ENCODE measurements at regions of chr5 and their contacts with region 1.

Region 1: GRCh38 chr5:82346399-82347165 is 68.4 kb upstream of the RPS23 start:
- DNase-seq: no peak
- H3K4me3 ChIP-seq: no peak overlapping the region
- H3K27ac ChIP-seq: no peak overlapping the region
- H3K4me1 ChIP-seq: no peaks in the 10 kb centered on the region
- H3K27me3 ChIP-seq: no peaks in the 10 kb centered on the region
- CTCF ChIP-seq: no peak

Region 2: GRCh38 chr5:82147865-82148573 is 198.6 kb before region 1 on chr5:
- CTCF ChIA-PET with region 1: no interaction called
- POLR2A ChIA-PET with region 1: no interaction called
- intact Hi-C with region 1: no loop called
- DNase-seq: no peak
- H3K4me3 ChIP-seq: no peak overlapping the region
- H3K27ac ChIP-seq: no peak overlapping the region
- H3K4me1 ChIP-seq: peaks cover 10% of the 10 kb centered on the region
- H3K27me3 ChIP-seq: no peaks in the 10 kb centered on the region
- CTCF ChIP-seq: no peak

Region 3: GRCh38 chr5:82387001-82387818 is 40.6 kb after region 1 on chr5:
- CTCF ChIA-PET with region 1: no interaction called
- POLR2A ChIA-PET with region 1: interaction called, 27 read pairs
- intact Hi-C with region 1: no loop called
- DNase-seq: peak in 1 of 2 experiments; percentile 65
- H3K4me3 ChIP-seq: no peak overlapping the region
- H3K27ac ChIP-seq: no peak overlapping the region
- H3K4me1 ChIP-seq: peaks cover 20% of the 10 kb centered on the region
- H3K27me3 ChIP-seq: no peaks in the 10 kb centered on the region
- CTCF ChIP-seq: no peak

Region 4: GRCh38 chr5:82421119-82421518 is 74.5 kb after region 1 on chr5:
- CTCF ChIA-PET with region 1: no interaction called
- POLR2A ChIA-PET with region 1: no interaction called
- intact Hi-C with region 1: no loop called
- DNase-seq: peak; percentile 31 to 73
- H3K4me3 ChIP-seq: no peak overlapping the region
- H3K27ac ChIP-seq: no peak overlapping the region
- H3K4me1 ChIP-seq: 0 out of 2 replicates have a peak, but pooled peaks cover 3% of the 10 kb centered on the region
- H3K27me3 ChIP-seq: no peaks in the 10 kb centered on the region
- CTCF ChIP-seq: peak; percentile 28; the same call in 1 of the 2 replicates

Region 5: DNA sequence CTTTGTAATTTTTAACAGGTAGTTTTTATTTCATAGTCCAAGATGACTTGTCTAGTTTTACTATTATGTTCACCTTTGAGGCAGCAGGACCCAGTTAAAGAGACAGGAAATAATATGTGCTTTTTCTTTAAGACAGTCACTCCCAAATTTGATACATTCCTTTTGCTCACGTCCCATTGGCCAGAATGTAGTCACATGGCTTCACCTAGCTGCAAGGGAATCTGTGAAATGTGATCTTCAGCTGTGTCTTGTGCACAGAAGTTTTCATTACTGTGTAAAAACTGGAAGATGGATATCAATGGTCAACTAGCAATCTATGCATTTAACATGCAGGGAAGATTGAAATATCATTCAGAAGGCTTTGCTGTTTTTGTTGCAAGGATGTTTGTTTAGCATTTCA is 771.9 kb after region 1 on chr5:
- CTCF ChIA-PET with region 1: no interaction called
- POLR2A ChIA-PET with region 1: no interaction called
- intact Hi-C with region 1: no loop called
- DNase-seq: no peak
- H3K4me3 ChIP-seq: no peak overlapping the region
- H3K27ac ChIP-seq: no peak overlapping the region
- H3K4me1 ChIP-seq: no peaks in the 10 kb centered on the region
- H3K27me3 ChIP-seq: no peaks in the 10 kb centered on the region
- CTCF ChIP-seq: no peak